ENCODE measurements at regions of chr2 and their contacts with region 1.

Region 1: GRCh38 chr2:25664183-25664964 is 9.0 kb downstream of the DTNB start:
- DNase-seq: peak in 3 of 10 donors; percentile 41 to 69 (median 52)

Region 2: DNA sequence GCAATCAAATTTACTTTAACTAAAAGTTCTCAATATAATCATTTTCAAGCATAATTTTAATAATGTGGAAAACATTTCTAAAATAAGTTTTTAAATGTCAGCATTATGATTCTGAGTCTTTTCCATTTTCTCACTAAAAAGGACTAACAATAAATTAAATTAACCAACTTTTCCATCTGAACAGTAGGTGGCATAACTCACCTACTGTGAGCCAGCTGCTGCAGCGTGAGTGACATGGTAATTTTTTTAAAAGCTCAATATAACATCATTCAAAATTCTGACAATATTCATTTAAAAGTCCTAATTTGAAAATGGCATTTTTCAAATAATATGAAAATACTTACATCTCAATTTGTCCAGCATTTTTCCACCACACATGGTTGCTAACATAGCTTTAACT is 57.5 kb before region 1 on chr2:
- intact Hi-C with region 1: loop called (anchors 2 kb)
- DNase-seq: no peak